Activated CD4-positive, alpha-beta memory T cell treated with anti-CD3 and anti-CD28 coated beads, Interleukin-2, amount 10 ng/mL, durations not matched to agents 7 days and 5 days (primary cell): ENCODE measurements at regions of chr1 and their contacts with region 1.

Region 1: GRCh38 chr1:150256554-150257341 is 826 bp upstream of the CA14 start:
- DNase-seq: no peak
- H3K4me3 Mint-ChIP-seq: no peak overlapping the region
- H3K27ac Mint-ChIP-seq: no peak overlapping the region
- H3K4me1 Mint-ChIP-seq: peaks cover 19% of the 10 kb centered on the region
- H3K27me3 Mint-ChIP-seq: peaks cover 51% of the 10 kb centered on the region

Region 2: DNA sequence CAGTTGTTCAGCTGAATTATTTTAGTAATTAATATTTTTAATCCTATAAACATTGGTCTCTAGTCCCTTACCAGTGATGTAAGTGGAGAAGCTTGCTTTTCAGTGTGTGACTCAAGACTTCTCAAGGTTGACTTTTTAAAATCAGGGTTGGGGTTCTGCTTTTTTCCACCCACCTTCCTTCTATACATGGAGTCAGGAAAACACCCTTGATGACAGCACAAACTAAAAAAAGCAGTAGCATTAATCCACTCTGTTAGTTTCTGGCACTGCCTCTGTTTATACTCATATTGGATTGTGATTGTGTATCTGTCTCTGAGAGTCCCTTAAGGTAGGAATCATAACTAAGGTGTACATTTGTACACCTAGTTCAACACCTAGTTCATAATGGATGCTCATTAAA is 115.3 kb before region 1 on chr1:
- CTCF ChIA-PET with region 1: no interaction called
- POLR2A ChIA-PET with region 1: no interaction called
- DNase-seq: no peak
- H3K4me3 Mint-ChIP-seq: no peak overlapping the region
- H3K27ac Mint-ChIP-seq: no peak overlapping the region
- H3K4me1 Mint-ChIP-seq: peaks cover 13% of the 10 kb centered on the region
- H3K27me3 Mint-ChIP-seq: no peaks in the 10 kb centered on the region

Region 3: GRCh38 chr1:150268705-150269403 is 12.1 kb after region 1 on chr1 and contains the start of gene APH1A:
- CTCF ChIA-PET with region 1: interaction called, 20 read pairs
- POLR2A ChIA-PET with region 1: interaction called, 7 read pairs
- DNase-seq: peak; percentile 95
- H3K4me3 Mint-ChIP-seq: peak within 1 kb of the TSS; percentile 91
- H3K27ac Mint-ChIP-seq: peak within 1 kb of the TSS; percentile 94
- H3K4me1 Mint-ChIP-seq: peaks cover 38% of the 10 kb centered on the region
- H3K27me3 Mint-ChIP-seq: no peaks in the 10 kb centered on the region
- total RNA-seq, gene APH1A: 142 to 144 TPM

Region 4: GRCh38 chr1:150281837-150282653 is 25.3 kb after region 1 on chr1 and contains the start of gene CIART:
- CTCF ChIA-PET with region 1: interaction called, 63 read pairs
- POLR2A ChIA-PET with region 1: interaction called, 10 read pairs
- DNase-seq: peak; percentile 80
- H3K4me3 Mint-ChIP-seq: peak within 1 kb of the TSS; percentile 77
- H3K27ac Mint-ChIP-seq: no peak within 1 kb of the TSS
- H3K4me1 Mint-ChIP-seq: peaks cover 30% of the 10 kb centered on the region
- H3K27me3 Mint-ChIP-seq: peaks cover 10% of the 10 kb centered on the region
- total RNA-seq, gene CIART: 1.5 to 1.7 TPM

Region 5: GRCh38 chr1:150515328-150516048 is 258.7 kb after region 1 on chr1 and contains the start of gene FALEC:
- CTCF ChIA-PET with region 1: interaction called, 22 read pairs
- POLR2A ChIA-PET with region 1: no interaction called
- DNase-seq: peak; percentile 93
- H3K4me3 Mint-ChIP-seq: peak within 1 kb of the TSS; percentile 75
- H3K27ac Mint-ChIP-seq: peak within 1 kb of the TSS; percentile 56
- H3K4me1 Mint-ChIP-seq: peaks cover 26% of the 10 kb centered on the region
- H3K27me3 Mint-ChIP-seq: peaks cover 2% of the 10 kb centered on the region
- total RNA-seq, gene FALEC: not detected

Region 6: GRCh38 chr1:150629115-150629928 is 372.6 kb after region 1 on chr1 and contains the start of gene ENSA:
- CTCF ChIA-PET with region 1: no interaction called
- POLR2A ChIA-PET with region 1: no interaction called
- DNase-seq: peak; percentile 97
- H3K4me3 Mint-ChIP-seq: no peak within 1 kb of the TSS
- H3K27ac Mint-ChIP-seq: no peak within 1 kb of the TSS
- H3K4me1 Mint-ChIP-seq: peaks cover 28% of the 10 kb centered on the region
- H3K27me3 Mint-ChIP-seq: no peaks in the 10 kb centered on the region
- total RNA-seq, gene ENSA: 221 to 223 TPM